SK-N-SH (cell line): ENCODE measurements at regions of chr15 and their contacts with region 1.

Region 1: GRCh38 chr15:91055548-91056331 is 33.3 kb upstream of the VPS33B start:
- DNase-seq: peak; percentile 84
- H3K4me3 ChIP-seq: no peak overlapping the region
- H3K27ac ChIP-seq: no peak overlapping the region
- H3K4me1 ChIP-seq: peaks cover 0 to 3% of the 10 kb centered on the region in 2 experiments; a peak in 1 of 4 replicates
- H3K27me3 ChIP-seq: peaks cover 36% of the 10 kb centered on the region; the same call in 1 of the 2 replicates
- CTCF ChIP-seq: peak; percentile 78
- EP300 ChIP-seq: no peak
- RAD21 ChIP-seq: peak; percentile 96

Region 2: GRCh38 chr15:90241343-90242192 is 814.2 kb before region 1 on chr15:
- CTCF ChIA-PET with region 1: no interaction called
- POLR2A ChIA-PET with region 1: no interaction called
- DNase-seq: no peak
- H3K4me3 ChIP-seq: no peak overlapping the region
- H3K27ac ChIP-seq: no peak overlapping the region
- H3K4me1 ChIP-seq: no peaks in the 10 kb centered on the region
- H3K27me3 ChIP-seq: no peaks in the 10 kb centered on the region
- CTCF ChIP-seq: no peak
- EP300 ChIP-seq: no peak
- RAD21 ChIP-seq: no peak

Region 3: GRCh38 chr15:91040856-91041255 is 14.9 kb before region 1 on chr15:
- CTCF ChIA-PET with region 1: interaction called, 10 read pairs
- POLR2A ChIA-PET with region 1: no interaction called
- DNase-seq: no peak
- H3K4me3 ChIP-seq: no peak overlapping the region
- H3K27ac ChIP-seq: no peak overlapping the region
- H3K4me1 ChIP-seq: no peaks in the 10 kb centered on the region
- H3K27me3 ChIP-seq: no peaks in the 10 kb centered on the region
- CTCF ChIP-seq: no peak
- EP300 ChIP-seq: no peak
- RAD21 ChIP-seq: no peak

Region 4: GRCh38 chr15:91214675-91215590 is 159.2 kb after region 1 on chr15:
- CTCF ChIA-PET with region 1: interaction called, 14 read pairs
- POLR2A ChIA-PET with region 1: no interaction called
- DNase-seq: no peak
- H3K4me3 ChIP-seq: no peak overlapping the region
- H3K27ac ChIP-seq: no peak overlapping the region
- H3K4me1 ChIP-seq: no peaks in the 10 kb centered on the region; a peak in 1 of 4 replicates
- H3K27me3 ChIP-seq: no peaks in the 10 kb centered on the region
- CTCF ChIP-seq: no peak
- EP300 ChIP-seq: no peak
- RAD21 ChIP-seq: no peak

Region 5: GRCh38 chr15:91231703-91232372 is 176.1 kb after region 1 on chr15:
- CTCF ChIA-PET with region 1: interaction called, 16 read pairs
- POLR2A ChIA-PET with region 1: no interaction called
- DNase-seq: peak; percentile 18
- H3K4me3 ChIP-seq: no peak overlapping the region
- H3K27ac ChIP-seq: no peak overlapping the region
- H3K4me1 ChIP-seq: peaks cover 0 to 10% of the 10 kb centered on the region in 2 experiments; a peak in 2 of 4 replicates
- H3K27me3 ChIP-seq: no peaks in the 10 kb centered on the region
- CTCF ChIP-seq: no peak
- EP300 ChIP-seq: no peak
- RAD21 ChIP-seq: no peak

Region 6: DNA sequence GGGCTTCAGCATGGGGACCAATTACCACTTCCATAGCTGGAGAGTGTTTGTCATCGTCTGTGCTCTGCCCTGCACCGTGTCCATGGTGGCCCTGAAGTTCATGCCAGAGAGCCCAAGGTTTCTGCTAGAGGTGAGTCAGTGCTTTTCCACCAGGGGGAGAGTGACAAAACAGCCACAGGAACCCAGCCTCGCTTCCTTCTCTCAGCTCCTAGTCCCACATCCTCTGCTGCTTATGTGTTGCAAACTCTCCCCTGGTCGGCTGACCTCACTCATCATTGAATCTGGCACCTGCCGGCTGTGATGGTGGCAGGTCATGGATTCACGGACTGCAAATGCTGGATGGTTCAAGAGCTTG is 202.7 kb after region 1 on chr15:
- CTCF ChIA-PET with region 1: interaction called, 25 read pairs
- POLR2A ChIA-PET with region 1: no interaction called
- DNase-seq: no peak
- H3K4me3 ChIP-seq: no peak overlapping the region
- H3K27ac ChIP-seq: no peak overlapping the region
- H3K4me1 ChIP-seq: no peaks in the 10 kb centered on the region
- H3K27me3 ChIP-seq: no peaks in the 10 kb centered on the region; the same call in 1 of the 2 replicates
- CTCF ChIP-seq: no peak
- EP300 ChIP-seq: no peak
- RAD21 ChIP-seq: no peak

Region 7: GRCh38 chr15:91271565-91272153 is 215.9 kb after region 1 on chr15:
- CTCF ChIA-PET with region 1: interaction called, 61 read pairs
- POLR2A ChIA-PET with region 1: no interaction called
- DNase-seq: peak; percentile 69
- H3K4me3 ChIP-seq: peak overlapping the region in 1 of 2 experiments; percentile 42; a peak in 1 of 4 replicates
- H3K27ac ChIP-seq: no peak overlapping the region
- H3K4me1 ChIP-seq: no peaks in the 10 kb centered on the region
- H3K27me3 ChIP-seq: no peaks in the 10 kb centered on the region
- CTCF ChIP-seq: peak; percentile 86
- EP300 ChIP-seq: no peak
- RAD21 ChIP-seq: peak; percentile 95